ENCODE measurements at regions of chr19 and their contacts with region 1.

Region 1: DNA sequence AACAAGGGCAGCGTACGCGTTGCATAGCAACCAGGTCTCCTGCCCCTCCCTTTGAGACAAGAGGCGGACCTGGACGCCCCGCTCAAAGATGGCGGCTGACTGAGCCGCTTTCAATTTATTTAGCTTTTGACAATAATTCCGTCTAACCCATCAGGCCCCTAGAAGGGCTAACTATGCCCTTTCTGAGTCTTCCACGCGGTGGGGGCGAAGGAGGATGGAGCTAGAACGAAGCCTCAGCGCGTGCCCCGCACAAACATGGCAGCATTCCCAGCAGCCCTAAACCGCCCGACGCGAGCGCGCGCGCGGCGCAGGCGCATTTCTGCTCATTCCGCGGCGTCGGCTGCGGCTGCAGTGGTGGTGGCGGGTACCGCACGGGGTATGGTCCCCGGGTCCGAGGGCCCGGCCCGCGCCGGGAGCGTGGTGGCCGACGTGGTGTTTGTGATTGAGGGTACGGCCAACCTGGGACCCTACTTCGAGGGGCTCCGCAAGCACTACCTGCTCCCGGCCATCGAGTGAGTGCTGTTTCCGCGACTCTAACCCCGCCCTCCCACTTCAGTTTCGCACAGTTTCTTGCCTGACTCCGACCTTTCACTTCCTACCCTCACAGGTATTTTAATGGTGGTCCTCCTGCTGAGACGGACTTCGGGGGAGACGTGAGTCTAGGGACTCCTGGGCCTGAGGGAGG is at the start of gene MED25:
- DNase-seq: peak; percentile 98
- ATAC-seq: peak; percentile 56
- H3K4me3 ChIP-seq: peak within 1 kb of the TSS; percentile 69 to 99 (median 94)
- H3K4me3 Mint-ChIP-seq: peak within 1 kb of the TSS; percentile 97
- H3K27ac ChIP-seq: peak within 1 kb of the TSS; percentile 89 to 98
- H3K27ac Mint-ChIP-seq: peak within 1 kb of the TSS; percentile 98
- H3K4me1 ChIP-seq: peaks cover 13 to 29% of the 10 kb centered on the region in 2 donors
- H3K4me1 Mint-ChIP-seq: peaks cover 41% of the 10 kb centered on the region
- H3K27me3 ChIP-seq: no peaks in the 10 kb centered on the region
- H3K27me3 Mint-ChIP-seq: no peaks in the 10 kb centered on the region
- CTCF ChIP-seq: peak; percentile 44
- total RNA-seq, gene MED25: 123 and 126 TPM in 2 replicates

Region 2: GRCh38 chr19:49640113-49640898 is 177.8 kb before region 1 on chr19 and contains the start of gene RRAS:
- CTCF ChIA-PET with region 1: no interaction called
- POLR2A ChIA-PET with region 1: no interaction called
- intact Hi-C with region 1: loop called (anchors 2 kb)
- DNase-seq: peak; percentile 100
- ATAC-seq: peak; percentile 69
- H3K4me3 ChIP-seq: peak within 1 kb of the TSS; percentile 35 to 97 (median 80)
- H3K4me3 Mint-ChIP-seq: peak within 1 kb of the TSS; percentile 95
- H3K27ac ChIP-seq: peak within 1 kb of the TSS; percentile 91 to 96
- H3K27ac Mint-ChIP-seq: peak within 1 kb of the TSS; percentile 95
- H3K4me1 ChIP-seq: peaks cover 37 to 55% of the 10 kb centered on the region in 2 donors
- H3K4me1 Mint-ChIP-seq: peaks cover 53% of the 10 kb centered on the region
- H3K27me3 ChIP-seq: no peaks in the 10 kb centered on the region
- H3K27me3 Mint-ChIP-seq: no peaks in the 10 kb centered on the region
- CTCF ChIP-seq: no peak
- total RNA-seq, gene RRAS: 5.6 and 6.3 TPM in 2 replicates

Region 3: GRCh38 chr19:49746206-49747091 is 71.7 kb before region 1 on chr19:
- CTCF ChIA-PET with region 1: no interaction called
- POLR2A ChIA-PET with region 1: no interaction called
- intact Hi-C with region 1: no loop called
- DNase-seq: peak; percentile 59
- ATAC-seq: peak; percentile 56
- H3K4me3 ChIP-seq: no peak overlapping the region
- H3K4me3 Mint-ChIP-seq: no peak overlapping the region
- H3K27ac ChIP-seq: no peak overlapping the region
- H3K27ac Mint-ChIP-seq: peak overlapping the region; percentile 37
- H3K4me1 ChIP-seq: no peaks in the 10 kb centered on the region
- H3K4me1 Mint-ChIP-seq: no peaks in the 10 kb centered on the region
- H3K27me3 ChIP-seq: no peaks in the 10 kb centered on the region
- H3K27me3 Mint-ChIP-seq: no peaks in the 10 kb centered on the region
- CTCF ChIP-seq: no peak

Region 4: DNA sequence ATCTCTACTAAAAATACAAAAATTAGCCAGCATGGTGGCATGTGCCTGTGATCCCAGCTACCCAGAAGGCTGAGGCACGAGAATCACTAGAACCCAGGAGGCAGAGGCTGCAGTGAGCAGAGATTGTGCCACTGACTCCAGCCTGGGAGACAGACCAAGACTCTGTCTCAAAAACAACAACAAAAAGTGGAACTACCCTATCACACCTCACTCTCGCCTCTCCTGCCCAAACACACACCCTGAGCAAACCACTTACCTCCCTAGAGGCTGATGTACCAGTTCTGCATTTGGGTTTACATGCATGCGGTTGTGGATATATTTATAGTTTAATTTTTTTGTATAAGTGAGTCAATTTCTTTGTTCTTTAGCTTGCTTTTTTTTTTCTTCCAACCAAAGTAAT is 25.2 kb after region 1 on chr19:
- CTCF ChIA-PET with region 1: interaction called, 6 read pairs
- POLR2A ChIA-PET with region 1: interaction called, 23 read pairs
- intact Hi-C with region 1: loop called (anchors 1 kb)
- DNase-seq: peak; percentile 83
- ATAC-seq: peak; percentile 99
- H3K4me3 ChIP-seq: peak overlapping the region in 3 of 5 experiments; percentile 17 to 52 (median 39)
- H3K4me3 Mint-ChIP-seq: peak overlapping the region; percentile 58
- H3K27ac ChIP-seq: peak overlapping the region; percentile 74 to 84
- H3K27ac Mint-ChIP-seq: peak overlapping the region; percentile 84
- H3K4me1 ChIP-seq: peaks cover 37 to 51% of the 10 kb centered on the region in 2 donors
- H3K4me1 Mint-ChIP-seq: peaks cover 47% of the 10 kb centered on the region
- H3K27me3 ChIP-seq: no peaks in the 10 kb centered on the region
- H3K27me3 Mint-ChIP-seq: no peaks in the 10 kb centered on the region
- CTCF ChIP-seq: no peak

Region 5: DNA sequence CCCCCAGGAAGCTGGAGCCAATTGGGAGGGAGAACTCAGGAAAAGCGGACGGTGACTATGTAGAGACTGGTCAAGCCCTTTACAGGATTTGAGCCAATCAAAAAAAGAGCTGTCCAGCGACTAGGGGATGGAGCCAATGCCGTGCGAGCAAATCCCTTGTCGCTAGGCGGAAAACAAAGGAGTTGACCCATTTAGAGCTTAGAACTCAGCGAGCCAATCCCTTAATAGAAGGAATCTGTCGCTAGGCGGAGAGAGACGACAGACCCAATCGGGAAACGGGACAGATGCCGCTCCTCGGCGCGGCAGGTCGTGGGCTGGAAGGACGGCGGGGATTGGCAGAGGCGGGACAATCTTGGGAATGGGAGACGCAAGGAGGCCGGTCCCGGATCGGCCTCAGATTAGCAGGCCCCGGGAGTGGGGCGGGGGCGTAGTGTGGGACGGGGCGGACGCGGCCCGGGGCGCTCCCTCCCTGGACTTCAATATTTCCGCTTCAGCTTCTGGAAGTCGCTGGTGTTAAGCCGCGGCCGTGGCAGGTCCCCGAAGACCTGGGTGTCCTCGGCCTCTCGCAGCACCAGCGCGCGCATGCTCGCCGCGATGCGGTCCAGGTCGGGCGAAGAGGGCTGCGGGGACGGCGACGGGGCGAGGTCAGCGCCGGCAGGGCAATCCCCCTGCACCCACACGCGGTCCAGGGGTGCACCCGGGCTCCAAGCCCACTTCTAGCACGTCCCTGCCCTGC is 51.5 kb after region 1 on chr19:
- CTCF ChIA-PET with region 1: interaction called, 7 read pairs
- POLR2A ChIA-PET with region 1: interaction called, 10 read pairs
- intact Hi-C with region 1: loop called (anchors 1 kb)
- DNase-seq: peak; percentile 97
- ATAC-seq: peak; percentile 80
- H3K4me3 ChIP-seq: peak overlapping the region; percentile 42 to 74 (median 69)
- H3K4me3 Mint-ChIP-seq: no peak overlapping the region
- H3K27ac ChIP-seq: peak overlapping the region; percentile 97 to 98
- H3K27ac Mint-ChIP-seq: peak overlapping the region; percentile 77
- H3K4me1 ChIP-seq: peaks cover 30 to 50% of the 10 kb centered on the region in 2 donors
- H3K4me1 Mint-ChIP-seq: peaks cover 42% of the 10 kb centered on the region
- H3K27me3 ChIP-seq: no peaks in the 10 kb centered on the region
- H3K27me3 Mint-ChIP-seq: no peaks in the 10 kb centered on the region
- CTCF ChIP-seq: no peak

Region 6: DNA sequence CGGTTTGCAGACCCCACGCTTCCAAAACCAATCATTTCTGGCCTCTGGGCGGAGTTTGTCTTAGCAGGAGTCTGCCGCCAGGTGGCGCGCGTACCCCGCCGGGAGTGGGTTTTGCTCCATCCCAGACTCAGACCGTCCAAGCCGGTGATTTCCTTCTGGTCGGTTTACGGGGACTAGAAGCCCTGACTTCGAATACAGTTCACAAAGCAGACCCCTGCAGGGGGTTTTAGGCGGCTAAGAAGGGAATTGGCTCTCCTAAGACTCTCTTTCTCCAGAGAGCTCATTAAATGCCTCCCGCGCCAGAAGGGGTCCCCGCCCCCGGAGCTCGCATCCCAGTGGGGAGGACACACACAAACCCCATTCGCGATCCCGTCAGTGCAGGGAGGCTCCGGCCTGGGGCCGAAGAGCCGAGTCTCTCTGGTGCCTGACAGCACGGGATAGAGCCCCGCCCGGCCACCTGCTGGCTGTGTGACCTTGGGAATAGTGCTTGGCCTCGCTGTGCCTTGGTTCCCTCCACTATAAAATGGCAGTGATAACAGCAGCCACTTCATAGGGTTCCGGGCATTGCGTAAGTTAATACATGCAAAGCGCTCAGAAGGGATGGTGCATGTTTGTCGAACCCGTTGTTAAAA is 119.8 kb after region 1 on chr19:
- CTCF ChIA-PET with region 1: no interaction called
- POLR2A ChIA-PET with region 1: no interaction called
- intact Hi-C with region 1: no loop called
- DNase-seq: peak; percentile 82
- ATAC-seq: peak; percentile 91
- H3K4me3 ChIP-seq: peak overlapping the region in 2 of 5 experiments; percentile 24 to 28
- H3K4me3 Mint-ChIP-seq: no peak overlapping the region
- H3K27ac ChIP-seq: no peak overlapping the region
- H3K27ac Mint-ChIP-seq: no peak overlapping the region
- H3K4me1 ChIP-seq: peaks cover 5 to 11% of the 10 kb centered on the region in 2 donors
- H3K4me1 Mint-ChIP-seq: peaks cover 7% of the 10 kb centered on the region
- H3K27me3 ChIP-seq: no peaks in the 10 kb centered on the region
- H3K27me3 Mint-ChIP-seq: peaks cover 20% of the 10 kb centered on the region
- CTCF ChIP-seq: peak; percentile 94